ENCODE measurements at regions of chr10 and their contacts with region 1.

Region 1: GRCh38 chr10:125868372-125868975 is 12.6 kb downstream of the DHX32 start:
- DNase-seq: peak; percentile 48
- H3K4me3 ChIP-seq: no peak overlapping the region
- H3K27ac ChIP-seq: no peak overlapping the region
- H3K4me1 ChIP-seq: peaks cover 16% of the 10 kb centered on the region
- H3K27me3 ChIP-seq: no peaks in the 10 kb centered on the region
- CTCF ChIP-seq: peak; percentile 90 to 98

Region 2: GRCh38 chr10:125936331-125936730 is 67.9 kb after region 1 on chr10:
- CTCF ChIA-PET with region 1: no interaction called
- dilution Hi-C with region 1: no loop called
- in situ Hi-C with region 1: no loop called
- intact Hi-C with region 1: loop called (anchors 1 kb)
- DNase-seq: no peak
- H3K4me3 ChIP-seq: no peak overlapping the region
- H3K27ac ChIP-seq: no peak overlapping the region
- H3K4me1 ChIP-seq: peaks cover 7% of the 10 kb centered on the region
- H3K27me3 ChIP-seq: no peaks in the 10 kb centered on the region
- CTCF ChIP-seq: no peak

Region 3: GRCh38 chr10:125976960-125977603 is 108.6 kb after region 1 on chr10:
- CTCF ChIA-PET with region 1: no interaction called
- dilution Hi-C with region 1: loop called (anchors 5 kb)
- in situ Hi-C with region 1: no loop called
- intact Hi-C with region 1: loop called (anchors 1 kb)
- DNase-seq: no peak
- H3K4me3 ChIP-seq: no peak overlapping the region
- H3K27ac ChIP-seq: no peak overlapping the region
- H3K4me1 ChIP-seq: peaks cover 7% of the 10 kb centered on the region
- H3K27me3 ChIP-seq: no peaks in the 10 kb centered on the region
- CTCF ChIP-seq: peak in 1 of 2 donors; percentile 18

Region 4: GRCh38 chr10:126090911-126091728 is 222.6 kb after region 1 on chr10:
- CTCF ChIA-PET with region 1: no interaction called
- dilution Hi-C with region 1: no loop called
- in situ Hi-C with region 1: no loop called
- intact Hi-C with region 1: loop called (anchors 5 kb)
- DNase-seq: peak; percentile 93
- H3K4me3 ChIP-seq: no peak overlapping the region
- H3K27ac ChIP-seq: peak overlapping the region; percentile 28
- H3K4me1 ChIP-seq: peaks cover 23% of the 10 kb centered on the region
- H3K27me3 ChIP-seq: no peaks in the 10 kb centered on the region
- CTCF ChIP-seq: no peak

Region 5: GRCh38 chr10:126302826-126303665 is 434.6 kb after region 1 on chr10:
- CTCF ChIA-PET with region 1: no interaction called
- dilution Hi-C with region 1: no loop called
- in situ Hi-C with region 1: no loop called
- intact Hi-C with region 1: loop called (anchors 5 kb)
- DNase-seq: no peak
- H3K4me3 ChIP-seq: no peak overlapping the region
- H3K27ac ChIP-seq: no peak overlapping the region
- H3K4me1 ChIP-seq: no peaks in the 10 kb centered on the region
- H3K27me3 ChIP-seq: peaks cover 2% of the 10 kb centered on the region
- CTCF ChIP-seq: peak in 1 of 2 donors; percentile 42

Region 6: GRCh38 chr10:126387023-126387921 is 518.8 kb after region 1 on chr10:
- CTCF ChIA-PET with region 1: no interaction called
- dilution Hi-C with region 1: no loop called
- in situ Hi-C with region 1: no loop called
- intact Hi-C with region 1: loop called (anchors 1 kb)
- DNase-seq: peak; percentile 46
- H3K4me3 ChIP-seq: peak overlapping the region; percentile 13 to 56 (median 52)
- H3K27ac ChIP-seq: no peak overlapping the region
- H3K4me1 ChIP-seq: peaks cover 18% of the 10 kb centered on the region
- H3K27me3 ChIP-seq: no peaks in the 10 kb centered on the region
- CTCF ChIP-seq: peak; percentile 63 to 75

Region 7: DNA sequence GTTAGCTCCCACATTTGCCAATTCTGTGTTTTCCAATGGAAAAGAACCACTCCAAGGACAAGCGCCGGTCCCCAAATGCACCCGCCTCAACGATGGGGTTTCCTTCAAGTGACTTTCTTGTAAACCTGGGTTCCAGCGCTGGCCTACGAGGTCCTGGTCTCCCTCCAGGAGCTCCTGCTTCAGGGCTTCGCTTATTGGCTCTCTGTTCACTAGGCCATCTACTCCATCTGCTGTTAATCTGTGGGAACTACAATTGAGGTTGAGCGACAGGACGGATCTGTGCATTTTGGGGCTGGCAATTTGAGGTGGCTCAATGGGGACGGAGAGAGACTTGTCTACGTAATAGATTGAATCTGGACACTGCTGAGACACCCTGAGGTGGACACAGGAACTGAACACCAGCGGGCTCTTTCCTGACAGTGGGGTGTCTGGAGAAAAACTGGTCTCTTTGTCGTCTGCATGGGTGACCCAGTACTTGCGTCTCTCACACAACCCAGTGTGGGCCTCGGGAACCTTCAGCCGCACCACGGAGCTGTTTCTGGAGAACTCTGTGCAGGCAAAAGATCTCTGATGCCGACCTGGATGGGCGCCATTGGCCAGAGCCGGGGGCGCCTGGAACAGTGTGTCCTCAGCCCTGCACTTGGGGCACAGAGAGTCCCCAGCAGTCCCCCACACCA is 635.7 kb after region 1 on chr10:
- CTCF ChIA-PET with region 1: no interaction called
- dilution Hi-C with region 1: no loop called
- in situ Hi-C with region 1: no loop called
- intact Hi-C with region 1: loop called (anchors 1 kb)
- DNase-seq: peak; percentile 30
- H3K4me3 ChIP-seq: no peak overlapping the region
- H3K27ac ChIP-seq: no peak overlapping the region
- H3K4me1 ChIP-seq: no peaks in the 10 kb centered on the region
- H3K27me3 ChIP-seq: no peaks in the 10 kb centered on the region
- CTCF ChIP-seq: peak; percentile 80 to 83